Uterus (tissue), 4 donors: ENCODE measurements at regions of chr9 and their contacts with region 1.

Region 1: DNA sequence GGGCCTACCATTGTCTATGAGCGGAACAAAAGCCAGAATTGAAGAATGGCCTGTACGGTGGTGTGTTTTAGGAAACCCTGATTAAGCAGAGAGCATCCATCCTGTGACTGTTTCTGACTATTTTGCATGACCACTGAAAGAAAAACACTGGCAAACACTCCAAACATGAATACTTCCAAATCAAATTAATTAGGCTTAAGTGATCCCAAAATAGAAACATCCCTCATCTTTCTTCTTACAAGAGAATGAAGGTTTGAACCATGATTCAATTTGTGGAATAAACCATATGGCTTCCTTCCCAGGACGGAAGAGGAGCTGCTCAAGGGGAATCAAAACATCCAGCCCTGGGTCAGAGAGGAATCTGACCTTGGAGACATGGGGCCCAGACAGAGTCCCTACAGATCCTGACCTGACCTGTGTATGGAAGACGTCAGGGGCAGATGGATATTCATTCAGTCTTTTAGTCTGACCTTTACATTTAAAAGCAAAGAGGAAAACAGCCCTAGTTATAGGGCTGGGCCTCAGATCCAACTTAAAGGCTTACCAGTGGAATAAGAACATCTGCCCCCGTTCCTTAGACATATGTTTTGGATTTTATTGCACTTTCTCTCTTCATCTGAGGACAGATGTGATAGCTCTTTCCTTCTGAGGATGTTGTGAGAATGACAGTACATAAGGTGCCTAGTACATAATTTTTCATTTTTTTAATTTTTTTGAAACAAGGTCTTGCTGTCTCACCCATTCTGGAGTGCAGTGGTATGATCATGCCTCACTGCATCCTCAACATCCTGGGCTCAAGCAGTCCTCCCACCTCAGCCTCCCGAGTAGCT is 17.6 kb upstream of the RECK start:
- DNase-seq: no peak
- H3K4me3 ChIP-seq: no peak overlapping the region
- H3K27ac ChIP-seq: no peak overlapping the region
- H3K4me1 ChIP-seq: no peaks in the 10 kb centered on the region
- H3K27me3 ChIP-seq: no peaks in the 10 kb centered on the region
- CTCF ChIP-seq: no peak
- POLR2A ChIP-seq: no peak

Region 2: GRCh38 chr9:35859310-35859989 is 159.7 kb before region 1 on chr9:
- intact Hi-C with region 1: no loop called
- DNase-seq: no peak
- H3K4me3 ChIP-seq: no peak overlapping the region
- H3K27ac ChIP-seq: no peak overlapping the region
- H3K4me1 ChIP-seq: no peaks in the 10 kb centered on the region
- H3K27me3 ChIP-seq: no peaks in the 10 kb centered on the region
- CTCF ChIP-seq: no peak
- POLR2A ChIP-seq: no peak

Region 3: GRCh38 chr9:35962126-35962906 is 56.8 kb before region 1 on chr9:
- intact Hi-C with region 1: loop called (anchors 10 kb)
- DNase-seq: peak in 1 of 2 donors; percentile 46
- H3K4me3 ChIP-seq: no peak overlapping the region
- H3K27ac ChIP-seq: peak overlapping the region in 1 of 2 donors; percentile 19
- H3K4me1 ChIP-seq: no peaks in the 10 kb centered on the region
- H3K27me3 ChIP-seq: no peaks in the 10 kb centered on the region
- CTCF ChIP-seq: no peak
- POLR2A ChIP-seq: no peak